CD4-positive, alpha-beta memory T cell (primary cell): ENCODE measurements at regions of chr1 and their contacts with region 1.

Region 1: GRCh38 chr1:203861379-203862184 is at the start of gene SNRPE:
- DNase-seq: peak; percentile 96 to 98 (median 98)
- H3K4me3 ChIP-seq: peak within 1 kb of the TSS; percentile 95 to 98
- H3K4me3 Mint-ChIP-seq: peak within 1 kb of the TSS; percentile 99 to 100 (median 100)
- H3K27ac ChIP-seq: peak within 1 kb of the TSS; percentile 82
- H3K27ac Mint-ChIP-seq: peak within 1 kb of the TSS; percentile 97 to 99 (median 98)
- H3K4me1 ChIP-seq: peaks cover 15% of the 10 kb centered on the region
- H3K4me1 Mint-ChIP-seq: peaks cover 15 to 33% (median 24%) of the 10 kb centered on the region in 4 donors
- H3K27me3 ChIP-seq: no peaks in the 10 kb centered on the region
- H3K27me3 Mint-ChIP-seq: no peaks in the 10 kb centered on the region
- total RNA-seq, gene SNRPE: 63.3 to 69.9 TPM

Region 2: DNA sequence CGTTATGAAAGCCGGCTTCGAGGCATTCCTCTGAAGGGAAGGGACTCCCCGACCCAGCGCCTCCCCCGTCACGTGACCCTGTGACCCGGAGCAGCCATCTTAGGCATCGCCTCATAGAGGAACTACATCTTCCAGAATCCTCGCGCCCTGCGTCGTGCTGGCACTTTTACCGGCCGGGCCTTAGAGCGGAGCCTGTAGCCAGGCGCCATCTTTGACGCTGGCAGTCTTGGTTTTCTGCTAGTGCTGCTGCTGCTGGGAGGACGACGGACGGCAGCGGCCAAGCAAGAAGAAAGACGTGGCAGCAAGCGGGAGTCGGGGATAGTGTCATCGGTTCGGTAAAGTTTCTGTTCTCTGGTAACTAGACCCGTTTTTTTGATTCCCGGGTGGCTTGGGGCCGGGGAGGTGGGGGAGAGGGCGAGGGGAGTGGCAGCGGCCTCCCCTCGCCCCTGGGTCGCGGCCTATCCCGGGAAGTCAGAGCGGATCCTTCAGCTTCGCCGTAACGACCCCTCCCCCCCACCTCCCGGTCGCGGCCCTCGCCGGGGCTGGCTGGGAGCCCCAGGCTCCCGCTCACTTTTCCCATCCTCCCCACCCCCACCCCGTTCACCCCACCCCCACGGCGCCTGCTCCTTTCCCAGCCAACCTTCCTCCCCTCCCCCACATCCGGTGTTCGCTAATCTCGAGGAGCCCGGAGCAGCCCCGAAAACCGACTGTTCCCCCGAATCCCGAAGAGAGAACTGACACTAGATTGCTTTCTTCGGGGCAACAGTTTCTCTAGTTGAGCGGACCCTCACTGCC is 65.9 kb before region 1 on chr1 and contains the starts of genes ZBED6 and ZC3H11A:
- CTCF ChIA-PET with region 1: interaction called, 4 read pairs
- POLR2A ChIA-PET with region 1: no interaction called
- intact Hi-C with region 1: loop called (anchors 1 kb)
- DNase-seq: peak; percentile 96 to 100 (median 98)
- H3K4me3 ChIP-seq: peak within 1 kb of the TSS; percentile 72 to 74
- H3K4me3 Mint-ChIP-seq: peak within 1 kb of the TSS; percentile 91 to 99 (median 97)
- H3K27ac ChIP-seq: peak within 1 kb of the TSS; percentile 81
- H3K27ac Mint-ChIP-seq: peak within 1 kb of the TSS; percentile 86 to 99 (median 98)
- H3K4me1 ChIP-seq: peaks cover 51% of the 10 kb centered on the region
- H3K4me1 Mint-ChIP-seq: peaks cover 35 to 57% (median 48%) of the 10 kb centered on the region in 4 donors
- H3K27me3 ChIP-seq: no peaks in the 10 kb centered on the region
- H3K27me3 Mint-ChIP-seq: no peaks in the 10 kb centered on the region
- total RNA-seq, gene ZBED6: 26.5 to 29.3 TPM
- total RNA-seq, gene ZC3H11A: 132 to 141 TPM

Region 3: GRCh38 chr1:203888807-203889251 is 27.2 kb after region 1 on chr1:
- CTCF ChIA-PET with region 1: no interaction called
- POLR2A ChIA-PET with region 1: no interaction called
- intact Hi-C with region 1: no loop called
- DNase-seq: no peak
- H3K4me3 ChIP-seq: no peak overlapping the region
- H3K4me3 Mint-ChIP-seq: no peak overlapping the region
- H3K27ac ChIP-seq: no peak overlapping the region
- H3K27ac Mint-ChIP-seq: no peak overlapping the region
- H3K4me1 ChIP-seq: no peaks in the 10 kb centered on the region
- H3K4me1 Mint-ChIP-seq: no peaks in the 10 kb centered on the region
- H3K27me3 ChIP-seq: no peaks in the 10 kb centered on the region
- H3K27me3 Mint-ChIP-seq: no peaks in the 10 kb centered on the region

Region 4: GRCh38 chr1:204128964-204129896 is 267.6 kb after region 1 on chr1:
- CTCF ChIA-PET with region 1: interaction called, 40 read pairs
- POLR2A ChIA-PET with region 1: interaction called, 10 read pairs
- intact Hi-C with region 1: loop called (anchors 1 kb)
- DNase-seq: peak; percentile 55 to 65 (median 59)
- H3K4me3 ChIP-seq: no peak overlapping the region
- H3K4me3 Mint-ChIP-seq: peak overlapping the region in 2 of 8 donors; percentile 36 to 46
- H3K27ac ChIP-seq: no peak overlapping the region
- H3K27ac Mint-ChIP-seq: peak overlapping the region in 4 of 7 donors; percentile 27 to 75 (median 44)
- H3K4me1 ChIP-seq: peaks cover 9% of the 10 kb centered on the region
- H3K4me1 Mint-ChIP-seq: peaks cover 5 to 14% (median 10%) of the 10 kb centered on the region in 4 donors
- H3K27me3 ChIP-seq: no peaks in the 10 kb centered on the region
- H3K27me3 Mint-ChIP-seq: peaks cover 0 to 1% of the 10 kb centered on the region in 2 donors

Region 5: GRCh38 chr1:204207136-204207616 is 345.6 kb after region 1 on chr1:
- CTCF ChIA-PET with region 1: interaction called, 4 read pairs
- POLR2A ChIA-PET with region 1: no interaction called
- intact Hi-C with region 1: loop called (anchors 1 kb)
- DNase-seq: peak; percentile 50 to 61 (median 55)
- H3K4me3 ChIP-seq: no peak overlapping the region
- H3K4me3 Mint-ChIP-seq: no peak overlapping the region
- H3K27ac ChIP-seq: no peak overlapping the region
- H3K27ac Mint-ChIP-seq: no peak overlapping the region
- H3K4me1 ChIP-seq: no peaks in the 10 kb centered on the region
- H3K4me1 Mint-ChIP-seq: peaks cover 0 to 4% (median 2%) of the 10 kb centered on the region in 4 donors
- H3K27me3 ChIP-seq: peaks cover 5% of the 10 kb centered on the region
- H3K27me3 Mint-ChIP-seq: peaks cover 20 to 32% of the 10 kb centered on the region in 2 donors

Region 6: DNA sequence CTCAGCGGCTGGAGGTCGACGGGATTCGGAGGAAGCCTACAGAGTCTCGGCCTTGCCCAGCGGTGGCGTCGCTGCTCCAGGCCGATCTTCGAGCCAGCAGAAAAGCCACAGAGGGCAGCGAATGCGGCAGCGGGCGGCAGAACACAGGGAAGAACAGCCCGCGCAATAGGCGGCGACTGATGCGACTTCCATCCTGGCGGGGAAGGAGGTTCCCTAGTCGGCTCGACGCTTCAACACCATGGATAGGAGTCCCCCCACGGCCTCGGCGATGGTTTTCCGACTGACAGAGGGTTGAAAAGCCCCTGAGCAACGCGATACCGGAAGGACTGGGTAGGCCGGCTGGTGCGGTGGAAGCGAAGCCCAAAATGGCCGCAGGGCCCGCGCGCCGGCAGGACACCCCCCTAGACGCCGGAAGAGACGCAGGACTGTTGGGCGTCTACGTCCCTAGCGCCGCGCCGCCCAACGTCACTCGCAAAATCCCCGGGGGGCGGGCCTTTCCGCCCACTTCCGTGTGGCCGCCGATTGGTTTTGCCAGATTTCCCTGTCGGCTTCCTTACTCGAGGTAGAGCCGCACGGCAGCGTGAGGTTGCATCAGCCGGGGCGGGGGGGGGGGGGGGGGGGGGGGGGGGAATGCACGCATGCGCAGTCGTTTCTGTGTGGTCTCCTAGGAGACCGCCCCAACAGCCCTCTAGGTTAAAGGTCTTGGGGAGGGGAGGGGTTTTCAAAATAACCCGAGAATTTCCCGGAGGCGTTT is 550.0 kb after region 1 on chr1 and contains the start of gene PPP1R15B:
- CTCF ChIA-PET with region 1: no interaction called
- POLR2A ChIA-PET with region 1: interaction called, 4 read pairs
- intact Hi-C with region 1: loop called (anchors 2 kb)
- DNase-seq: peak; percentile 98 to 99 (median 98)
- H3K4me3 ChIP-seq: peak within 1 kb of the TSS; percentile 67 to 99
- H3K4me3 Mint-ChIP-seq: peak within 1 kb of the TSS; percentile 98 to 99 (median 99)
- H3K27ac ChIP-seq: peak within 1 kb of the TSS; percentile 100
- H3K27ac Mint-ChIP-seq: peak within 1 kb of the TSS; percentile 99 to 100 (median 100)
- H3K4me1 ChIP-seq: peaks cover 7% of the 10 kb centered on the region
- H3K4me1 Mint-ChIP-seq: peaks cover 8 to 21% (median 13%) of the 10 kb centered on the region in 4 donors
- H3K27me3 ChIP-seq: no peaks in the 10 kb centered on the region
- H3K27me3 Mint-ChIP-seq: no peaks in the 10 kb centered on the region
- total RNA-seq, gene PPP1R15B: 78.0 to 81.1 TPM